ENCODE measurements at regions of chr11 and their contacts with region 1.

Region 1: GRCh38 chr11:76919887-76920746 is 59.4 kb downstream of the ACER3 start:
- DNase-seq: peak; percentile 49
- H3K4me3 Mint-ChIP-seq: no peak overlapping the region
- H3K27ac Mint-ChIP-seq: no peak overlapping the region
- H3K4me1 Mint-ChIP-seq: peaks cover 14% of the 10 kb centered on the region
- H3K27me3 Mint-ChIP-seq: peaks cover 3% of the 10 kb centered on the region

Region 2: GRCh38 chr11:76903329-76903728 is 16.8 kb before region 1 on chr11:
- intact Hi-C with region 1: no loop called
- DNase-seq: no peak
- H3K4me3 Mint-ChIP-seq: no peak overlapping the region
- H3K27ac Mint-ChIP-seq: no peak overlapping the region
- H3K4me1 Mint-ChIP-seq: peaks cover 5% of the 10 kb centered on the region
- H3K27me3 Mint-ChIP-seq: no peaks in the 10 kb centered on the region

Region 3: DNA sequence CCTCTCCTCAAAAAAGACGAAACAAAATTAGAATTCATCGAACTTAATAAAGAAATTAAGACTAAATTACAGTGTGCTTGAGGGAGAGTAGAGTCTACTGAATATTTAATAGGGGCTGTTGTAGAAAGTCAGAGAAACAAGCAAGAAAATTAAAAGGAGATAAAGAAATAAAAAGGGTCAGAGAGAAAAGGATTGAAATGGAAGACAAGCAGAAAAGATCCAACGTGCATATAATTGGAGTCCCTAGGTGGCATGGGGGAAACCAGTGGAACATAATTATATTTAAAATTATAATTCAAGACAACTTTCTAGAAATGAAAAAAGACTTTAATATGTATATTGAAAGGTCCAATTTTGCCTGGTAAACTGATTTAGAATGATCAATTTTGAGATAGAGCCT is 14.9 kb after region 1 on chr11:
- intact Hi-C with region 1: no loop called
- DNase-seq: no peak
- H3K4me3 Mint-ChIP-seq: no peak overlapping the region
- H3K27ac Mint-ChIP-seq: no peak overlapping the region
- H3K4me1 Mint-ChIP-seq: no peaks in the 10 kb centered on the region
- H3K27me3 Mint-ChIP-seq: no peaks in the 10 kb centered on the region

Region 4: GRCh38 chr11:77091146-77091940 is 171.2 kb after region 1 on chr11:
- intact Hi-C with region 1: loop called (anchors 1 kb)
- DNase-seq: peak; percentile 70
- H3K4me3 Mint-ChIP-seq: no peak overlapping the region
- H3K27ac Mint-ChIP-seq: no peak overlapping the region
- H3K4me1 Mint-ChIP-seq: peaks cover 6% of the 10 kb centered on the region
- H3K27me3 Mint-ChIP-seq: no peaks in the 10 kb centered on the region

Measured in activated T-helper 2 cell treated with anti-CD3 and anti-CD28 coated beads, Interferon-gamma antibody, Interleukin-2, Interleukin-4, amounts not matched to agents 10 μg/mL and 5 μg/mL and 100 μg/mL, durations not matched to agents 14 hours and 24 hours and 36 hours (primary cell).